Motor neuron (in vitro differentiated cells): ENCODE measurements at regions of chr15 and their contacts with region 1.

Region 1: GRCh38 chr15:48423896-48424475 is 92.8 kb downstream of the DUT start:
- ATAC-seq: peak in 2 of 8 experiments; percentile 37 to 54
- H3K4me3 ChIP-seq: no peak overlapping the region
- H3K27ac ChIP-seq: no peak overlapping the region
- H3K4me1 ChIP-seq: no peaks in the 10 kb centered on the region

Region 2: GRCh38 chr15:48360841-48361240 is 63.1 kb before region 1 on chr15:
- in situ Hi-C with region 1: loop called in 1 of 9 experiments (anchors 10 kb)
- ATAC-seq: peak in 3 of 8 experiments; percentile 37 to 70 (median 65)
- H3K4me3 ChIP-seq: no peak overlapping the region
- H3K27ac ChIP-seq: no peak overlapping the region
- H3K4me1 ChIP-seq: no peaks in the 10 kb centered on the region